GM12878 (cell line): ENCODE measurements at regions of chr3 and their contacts with region 1.

Region 1: DNA sequence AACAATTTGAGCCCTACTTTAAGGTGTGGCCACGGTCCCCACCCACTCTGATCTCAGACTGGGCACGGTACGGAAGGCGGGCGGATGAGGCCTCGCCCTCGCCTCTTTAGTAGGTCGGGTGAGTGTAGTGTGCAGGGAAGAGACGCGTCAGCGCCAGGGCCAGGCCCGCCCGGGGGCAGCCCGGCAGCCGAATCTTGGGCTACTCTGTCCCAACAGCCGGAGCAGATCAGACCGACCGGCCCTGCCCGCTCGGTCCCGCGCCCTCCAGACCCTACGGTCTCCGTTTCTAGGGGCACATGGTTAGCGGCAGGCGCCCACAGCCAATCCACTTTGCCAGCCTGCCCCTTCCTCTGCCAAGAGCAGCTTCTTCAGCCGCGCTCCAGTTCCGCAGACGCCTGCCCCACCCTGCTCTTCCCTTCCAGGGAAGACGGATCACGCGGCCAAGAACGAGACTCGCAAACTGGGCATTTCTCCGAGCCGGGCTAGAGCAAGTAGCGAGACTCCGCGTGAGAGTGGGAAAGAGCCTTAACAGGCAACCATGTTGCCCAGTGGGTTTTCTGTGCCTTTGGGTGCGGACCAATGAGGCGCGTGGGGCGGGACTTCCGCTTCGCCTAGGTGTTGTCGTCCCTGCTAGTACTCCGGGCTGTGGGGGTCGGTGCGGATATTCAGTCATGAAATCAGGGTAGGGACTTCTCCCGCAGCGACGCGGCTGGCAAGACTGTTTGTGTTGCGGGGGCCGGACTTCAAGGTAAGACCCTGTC is at the start of gene RNF13:
- DNase-seq: peak; percentile 87
- ATAC-seq: peak; percentile 94
- H3K4me3 ChIP-seq: peak within 1 kb of the TSS; percentile 80
- H3K27ac ChIP-seq: peak within 1 kb of the TSS; percentile 93
- H3K4me1 ChIP-seq: no peaks in the 10 kb centered on the region
- H3K27me3 ChIP-seq: no peaks in the 10 kb centered on the region
- CTCF ChIP-seq: no peak
- EP300 ChIP-seq: no peak
- POLR2A ChIP-seq: peak; percentile 83
- RAD21 ChIP-seq: no peak
- polyA plus RNA-seq, gene RNF13: 38.7 to 45.9 TPM

Region 2: GRCh38 chr3:149487598-149488197 is 325.1 kb before region 1 on chr3:
- CTCF ChIA-PET with region 1: interaction called, 13 read pairs
- POLR2A ChIA-PET with region 1: no interaction called
- RAD21 ChIA-PET with region 1: interaction called, 3 read pairs
- SMC1A ChIA-PET with region 1: no interaction called
- in situ Hi-C with region 1: no loop called
- intact Hi-C with region 1: no loop called
- DNase-seq: no peak
- ATAC-seq: peak; percentile 96
- H3K4me3 ChIP-seq: no peak overlapping the region
- H3K27ac ChIP-seq: no peak overlapping the region
- H3K4me1 ChIP-seq: no peaks in the 10 kb centered on the region
- H3K27me3 ChIP-seq: no peaks in the 10 kb centered on the region
- CTCF ChIP-seq: peak; percentile 56 to 88 (median 87)
- EP300 ChIP-seq: no peak
- POLR2A ChIP-seq: no peak
- RAD21 ChIP-seq: no peak

Region 3: DNA sequence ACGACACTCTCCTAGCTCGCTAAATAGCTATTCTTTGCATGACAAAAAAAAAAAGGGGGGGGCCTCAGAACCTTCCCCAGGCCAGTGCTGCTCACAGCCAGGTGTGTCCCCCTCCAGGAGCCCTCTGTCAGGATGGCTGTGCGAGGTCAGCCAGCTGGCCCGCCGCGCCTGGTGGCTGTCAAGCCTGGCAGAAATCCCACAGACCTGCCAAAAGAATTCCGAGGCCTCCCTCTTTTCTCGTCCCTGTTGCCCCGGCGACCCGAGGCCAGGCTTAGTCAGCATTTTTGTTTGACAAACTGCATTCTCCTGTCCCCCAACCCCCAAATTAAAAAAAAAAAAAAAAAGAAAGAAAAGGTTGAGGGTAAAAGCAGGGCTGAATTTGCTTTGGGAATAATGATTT is 276.4 kb before region 1 on chr3:
- CTCF ChIA-PET with region 1: interaction called, 19 read pairs
- POLR2A ChIA-PET with region 1: interaction called, 4 read pairs
- RAD21 ChIA-PET with region 1: interaction called, 10 read pairs
- SMC1A ChIA-PET with region 1: interaction called, 14 read pairs
- in situ Hi-C with region 1: no loop called
- intact Hi-C with region 1: no loop called
- DNase-seq: no peak
- ATAC-seq: no peak
- H3K4me3 ChIP-seq: no peak overlapping the region
- H3K27ac ChIP-seq: no peak overlapping the region
- H3K4me1 ChIP-seq: peaks cover 12% of the 10 kb centered on the region
- H3K27me3 ChIP-seq: no peaks in the 10 kb centered on the region
- CTCF ChIP-seq: no peak
- EP300 ChIP-seq: no peak
- POLR2A ChIP-seq: no peak
- RAD21 ChIP-seq: no peak

Region 4: DNA sequence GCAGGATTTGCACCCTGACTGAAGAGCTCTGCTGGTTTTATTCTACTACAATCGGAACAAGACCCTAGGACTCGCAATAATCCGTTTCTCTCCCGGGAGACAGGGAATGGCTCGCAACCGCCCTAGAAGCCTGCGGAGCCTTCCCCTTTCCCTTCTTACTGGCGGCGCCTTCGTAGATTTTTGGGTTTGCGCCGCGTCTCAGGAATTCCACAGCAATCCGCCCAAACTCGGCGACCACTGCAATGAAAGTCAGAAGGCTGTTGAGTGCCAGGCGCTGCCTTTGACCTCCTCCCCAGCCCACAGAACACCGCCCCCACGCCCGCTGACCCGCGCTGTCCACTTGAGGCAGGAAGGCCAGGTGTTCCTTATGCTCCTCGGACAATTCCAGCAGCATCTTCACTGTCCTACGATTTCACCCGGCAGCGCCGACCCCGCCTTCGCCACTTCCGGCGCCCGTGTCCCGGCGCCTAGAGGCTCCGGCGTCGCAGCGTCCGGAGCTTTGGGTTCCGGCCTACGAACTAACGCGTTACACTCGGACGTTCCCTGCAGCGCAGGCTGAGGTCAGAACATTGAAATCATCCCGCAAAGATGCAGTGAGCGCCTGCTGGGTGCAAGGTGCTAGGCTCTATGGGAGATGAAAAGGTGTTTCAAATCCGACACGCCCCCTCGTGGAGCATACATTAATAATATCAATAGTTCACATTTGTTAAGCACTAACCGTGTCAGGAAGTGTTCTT is 60.6 kb before region 1 on chr3 and contains the start of gene COMMD2:
- CTCF ChIA-PET with region 1: interaction called, 28 read pairs
- POLR2A ChIA-PET with region 1: interaction called, 6 read pairs
- RAD21 ChIA-PET with region 1: interaction called, 3 read pairs
- SMC1A ChIA-PET with region 1: interaction called, 9 read pairs
- in situ Hi-C with region 1: no loop called
- intact Hi-C with region 1: loop called (anchors 2 kb)
- DNase-seq: peak; percentile 84
- ATAC-seq: peak; percentile 100
- H3K4me3 ChIP-seq: peak within 1 kb of the TSS; percentile 85
- H3K27ac ChIP-seq: peak within 1 kb of the TSS; percentile 54
- H3K4me1 ChIP-seq: no peaks in the 10 kb centered on the region
- H3K27me3 ChIP-seq: no peaks in the 10 kb centered on the region
- CTCF ChIP-seq: peak; percentile 21 to 47 (median 46); a peak in 5 of 6 replicates
- EP300 ChIP-seq: no peak
- POLR2A ChIP-seq: peak; percentile 95
- RAD21 ChIP-seq: peak; percentile 40
- polyA plus RNA-seq, gene COMMD2: 59.4 to 97.0 TPM

Region 5: DNA sequence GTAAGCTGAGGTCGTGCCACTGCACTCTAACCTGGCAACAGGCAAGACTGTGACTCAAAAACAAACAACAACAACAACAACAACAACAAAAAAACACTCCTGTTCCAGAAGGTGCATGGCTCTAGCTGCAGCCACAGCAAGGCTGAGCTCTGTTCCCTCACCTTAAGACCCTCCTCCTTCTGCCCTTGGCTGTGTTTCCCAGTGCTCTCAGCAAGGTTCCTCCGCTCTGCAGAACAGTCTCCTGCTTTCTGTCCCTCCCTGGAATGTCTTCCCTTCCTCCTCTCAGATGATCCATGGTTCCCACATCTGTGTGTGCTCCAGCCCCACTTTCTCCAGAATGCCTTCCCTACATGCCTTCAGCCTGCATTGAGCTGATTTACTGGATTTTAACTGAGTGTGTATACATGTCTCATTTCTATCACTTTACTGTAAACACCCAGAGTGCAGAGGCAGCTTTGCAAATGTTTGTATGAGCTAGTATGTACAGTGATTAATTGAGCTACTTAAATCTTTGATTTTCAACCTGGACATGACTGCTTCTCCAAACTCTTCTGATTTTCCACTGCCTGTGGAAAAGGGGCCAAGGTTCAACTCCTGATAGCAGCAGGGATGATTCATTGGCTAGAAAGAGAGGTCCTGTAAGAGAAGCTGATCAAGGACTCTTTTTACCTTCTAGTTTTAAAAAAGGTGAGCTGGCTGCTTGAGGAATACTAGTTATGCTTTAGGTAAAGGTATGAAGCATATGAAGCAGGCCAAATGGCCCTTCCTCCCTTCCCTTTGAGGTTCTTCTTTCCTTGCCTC is 35.2 kb before region 1 on chr3:
- CTCF ChIA-PET with region 1: interaction called, 126 read pairs
- POLR2A ChIA-PET with region 1: no interaction called
- RAD21 ChIA-PET with region 1: interaction called, 7 read pairs
- SMC1A ChIA-PET with region 1: interaction called, 4 read pairs
- in situ Hi-C with region 1: no loop called
- intact Hi-C with region 1: no loop called
- DNase-seq: no peak
- ATAC-seq: no peak
- H3K4me3 ChIP-seq: no peak overlapping the region
- H3K27ac ChIP-seq: no peak overlapping the region
- H3K4me1 ChIP-seq: peaks cover 4% of the 10 kb centered on the region
- H3K27me3 ChIP-seq: no peaks in the 10 kb centered on the region; a peak in 2 of 4 replicates
- CTCF ChIP-seq: no peak
- EP300 ChIP-seq: no peak
- POLR2A ChIP-seq: no peak
- RAD21 ChIP-seq: no peak

Region 6: GRCh38 chr3:149850787-149851584 is 38.2 kb after region 1 on chr3:
- CTCF ChIA-PET with region 1: interaction called, 10 read pairs
- POLR2A ChIA-PET with region 1: no interaction called
- RAD21 ChIA-PET with region 1: no interaction called
- SMC1A ChIA-PET with region 1: no interaction called
- in situ Hi-C with region 1: no loop called
- intact Hi-C with region 1: no loop called
- DNase-seq: no peak
- ATAC-seq: no peak
- H3K4me3 ChIP-seq: no peak overlapping the region
- H3K27ac ChIP-seq: no peak overlapping the region
- H3K4me1 ChIP-seq: no peaks in the 10 kb centered on the region
- H3K27me3 ChIP-seq: no peaks in the 10 kb centered on the region
- CTCF ChIP-seq: no peak
- EP300 ChIP-seq: no peak
- POLR2A ChIP-seq: no peak
- RAD21 ChIP-seq: no peak

Region 7: GRCh38 chr3:150268426-150269391 is 455.9 kb after region 1 on chr3:
- CTCF ChIA-PET with region 1: no interaction called
- POLR2A ChIA-PET with region 1: no interaction called
- RAD21 ChIA-PET with region 1: no interaction called
- SMC1A ChIA-PET with region 1: no interaction called
- in situ Hi-C with region 1: no loop called
- intact Hi-C with region 1: no loop called
- DNase-seq: no peak
- ATAC-seq: no peak
- H3K4me3 ChIP-seq: no peak overlapping the region
- H3K27ac ChIP-seq: no peak overlapping the region
- H3K4me1 ChIP-seq: no peaks in the 10 kb centered on the region
- H3K27me3 ChIP-seq: no peaks in the 10 kb centered on the region
- CTCF ChIP-seq: no peak
- EP300 ChIP-seq: no peak
- POLR2A ChIP-seq: no peak
- RAD21 ChIP-seq: no peak